SK-N-SH (cell line): ENCODE measurements at regions of chr7 and their contacts with region 1.

Region 1: DNA sequence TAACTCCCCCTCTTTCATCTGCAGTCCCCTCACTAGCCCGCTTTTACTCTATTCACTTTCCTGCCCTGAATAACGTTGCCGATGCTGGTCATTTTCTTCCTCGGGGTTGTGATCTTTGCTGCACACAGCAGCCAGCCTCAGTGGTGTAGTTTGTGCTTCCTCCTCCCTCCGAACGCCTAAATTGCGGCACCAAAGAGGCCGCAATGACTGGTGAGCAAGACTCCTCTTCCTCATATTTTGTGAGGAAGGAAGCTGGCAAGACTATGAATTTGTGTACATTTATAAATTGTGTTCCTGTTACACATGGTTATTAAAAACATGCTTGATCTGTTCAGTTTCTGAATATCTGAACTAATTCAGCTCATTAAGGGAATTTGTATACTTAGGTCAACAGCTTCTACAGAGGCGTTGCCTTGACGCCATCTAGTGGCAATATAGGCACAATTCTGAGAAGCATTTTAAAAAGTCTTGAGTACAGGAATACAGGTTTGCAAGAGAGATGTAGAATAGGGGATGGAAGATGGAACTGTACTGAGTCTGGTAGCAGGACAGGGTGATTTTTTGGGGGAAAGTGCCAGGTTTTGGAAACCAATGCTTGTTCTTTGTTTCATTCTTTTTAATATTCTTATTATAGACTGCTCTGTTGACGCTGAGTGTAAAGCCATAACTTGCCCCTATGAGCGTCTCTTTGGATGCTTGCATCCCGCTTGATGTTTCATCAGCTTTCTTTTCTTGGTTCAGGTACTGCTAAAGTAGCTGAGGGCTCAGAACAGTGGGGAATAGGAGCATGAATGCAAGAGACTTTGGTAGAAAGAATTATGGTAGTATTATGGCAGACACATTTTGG is 4.1 kb upstream of the TAS2R5 start:
- DNase-seq: peak; percentile 63
- H3K4me3 ChIP-seq: no peak overlapping the region; a peak in 1 of 4 replicates
- H3K27ac ChIP-seq: no peak overlapping the region
- H3K4me1 ChIP-seq: no peaks in the 10 kb centered on the region
- H3K27me3 ChIP-seq: no peaks in the 10 kb centered on the region
- CTCF ChIP-seq: peak; percentile 98
- EP300 ChIP-seq: no peak
- RAD21 ChIP-seq: peak; percentile 80

Region 2: GRCh38 chr7:141754939-141755338 is 31.0 kb before region 1 on chr7:
- CTCF ChIA-PET with region 1: interaction called, 11 read pairs
- POLR2A ChIA-PET with region 1: no interaction called
- DNase-seq: peak; percentile 43
- H3K4me3 ChIP-seq: no peak overlapping the region
- H3K27ac ChIP-seq: no peak overlapping the region
- H3K4me1 ChIP-seq: no peaks in the 10 kb centered on the region
- H3K27me3 ChIP-seq: no peaks in the 10 kb centered on the region
- CTCF ChIP-seq: peak; percentile 56
- EP300 ChIP-seq: no peak
- RAD21 ChIP-seq: peak; percentile 42

Region 3: GRCh38 chr7:141763797-141764196 is 22.1 kb before region 1 on chr7 and contains the start of gene TAS2R3:
- CTCF ChIA-PET with region 1: interaction called, 17 read pairs
- POLR2A ChIA-PET with region 1: no interaction called
- DNase-seq: no peak
- H3K4me3 ChIP-seq: no peak within 1 kb of the TSS
- H3K27ac ChIP-seq: no peak within 1 kb of the TSS
- H3K4me1 ChIP-seq: no peaks in the 10 kb centered on the region
- H3K27me3 ChIP-seq: no peaks in the 10 kb centered on the region
- CTCF ChIP-seq: no peak
- EP300 ChIP-seq: no peak
- RAD21 ChIP-seq: no peak
- polyA plus RNA-seq, gene TAS2R3: not detected in 2 replicates

Region 4: DNA sequence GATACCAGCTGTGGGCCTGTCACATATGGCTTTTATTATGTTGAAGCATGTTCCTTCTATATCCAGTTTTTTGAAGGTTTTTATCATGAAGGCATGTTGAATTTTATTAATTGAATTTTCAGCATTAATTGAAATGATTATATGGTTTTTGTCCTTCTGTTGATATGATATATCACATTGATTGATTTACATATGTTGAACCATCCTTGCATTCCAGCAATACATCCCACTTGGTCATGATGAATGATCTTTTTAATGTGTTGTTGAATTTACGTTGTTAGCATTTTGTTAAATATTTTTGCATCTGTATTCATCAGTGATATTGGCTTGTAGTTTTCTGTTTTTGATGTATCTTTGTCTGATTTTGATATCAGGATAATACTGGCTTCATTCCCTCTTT is 34.1 kb after region 1 on chr7:
- CTCF ChIA-PET with region 1: interaction called, 12 read pairs
- POLR2A ChIA-PET with region 1: no interaction called
- DNase-seq: no peak
- H3K4me3 ChIP-seq: no peak overlapping the region
- H3K27ac ChIP-seq: no peak overlapping the region
- H3K4me1 ChIP-seq: no peaks in the 10 kb centered on the region
- H3K27me3 ChIP-seq: no peaks in the 10 kb centered on the region
- CTCF ChIP-seq: no peak
- EP300 ChIP-seq: no peak
- RAD21 ChIP-seq: no peak

Region 5: GRCh38 chr7:141874787-141875186 is 88.9 kb after region 1 on chr7:
- CTCF ChIA-PET with region 1: no interaction called
- POLR2A ChIA-PET with region 1: no interaction called
- DNase-seq: no peak
- H3K4me3 ChIP-seq: no peak overlapping the region
- H3K27ac ChIP-seq: no peak overlapping the region
- H3K4me1 ChIP-seq: no peaks in the 10 kb centered on the region
- H3K27me3 ChIP-seq: no peaks in the 10 kb centered on the region
- CTCF ChIP-seq: no peak
- EP300 ChIP-seq: no peak
- RAD21 ChIP-seq: no peak

Region 6: DNA sequence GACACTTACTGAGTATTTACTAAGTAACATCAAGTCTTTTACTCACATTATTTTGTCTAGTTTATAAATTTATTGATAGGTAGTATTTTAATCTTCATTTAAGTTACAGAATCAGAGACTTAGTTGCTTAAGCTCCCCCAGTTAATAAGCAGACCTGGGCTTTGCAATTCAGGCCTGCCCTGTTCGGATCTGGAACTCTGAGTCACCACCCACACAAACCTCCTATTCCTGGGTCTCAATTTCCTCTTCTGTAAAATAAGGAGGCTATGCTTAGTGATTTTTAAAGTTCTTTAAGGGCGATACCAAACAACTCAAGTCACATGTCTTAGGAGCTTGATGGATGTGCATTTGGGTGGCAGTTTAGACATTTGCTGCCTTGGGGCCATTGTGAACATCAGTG is 206.2 kb after region 1 on chr7:
- CTCF ChIA-PET with region 1: no interaction called
- POLR2A ChIA-PET with region 1: no interaction called
- DNase-seq: no peak
- H3K4me3 ChIP-seq: no peak overlapping the region
- H3K27ac ChIP-seq: no peak overlapping the region
- H3K4me1 ChIP-seq: 0 out of 4 replicates have a peak, but pooled peaks cover 0 to 4% of the 10 kb centered on the region in 2 experiments
- H3K27me3 ChIP-seq: no peaks in the 10 kb centered on the region
- CTCF ChIP-seq: no peak
- EP300 ChIP-seq: no peak
- RAD21 ChIP-seq: no peak